Activated CD8-positive, alpha-beta T cell treated with anti-CD3 and anti-CD28 coated beads, Interleukin-2, amount 10 ng/mL, durations not matched to agents 7 days and 5 days (primary cell): ENCODE measurements at regions of chr19 and their contacts with region 1.

Region 1: DNA sequence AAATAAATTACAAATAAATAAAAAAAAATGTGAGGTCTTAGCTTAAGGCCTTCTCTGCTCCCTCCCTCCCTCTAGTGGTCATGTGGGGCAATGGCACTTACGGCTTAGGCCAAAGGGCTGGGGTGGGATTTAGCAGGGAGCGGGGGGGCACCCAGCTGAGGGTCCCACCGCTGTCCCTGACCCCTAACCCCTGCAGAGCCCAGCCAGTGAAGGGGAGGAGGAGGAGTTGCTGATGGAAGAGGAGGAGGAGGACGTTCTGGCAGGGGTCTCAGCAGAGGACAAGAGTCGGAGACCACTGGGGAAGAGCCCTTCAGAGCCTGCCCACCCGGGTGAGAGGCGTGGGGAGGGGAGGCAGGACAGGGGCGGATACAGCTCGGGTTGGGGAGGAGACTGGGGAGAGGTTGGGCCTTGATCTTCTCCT is 9.3 kb downstream of the MPND start:
- DNase-seq: peak; percentile 77
- ATAC-seq: peak; percentile 71
- H3K4me3 Mint-ChIP-seq: no peak overlapping the region
- H3K27ac Mint-ChIP-seq: peak overlapping the region; percentile 74
- H3K4me1 Mint-ChIP-seq: no peaks in the 10 kb centered on the region
- H3K27me3 Mint-ChIP-seq: no peaks in the 10 kb centered on the region

Region 2: DNA sequence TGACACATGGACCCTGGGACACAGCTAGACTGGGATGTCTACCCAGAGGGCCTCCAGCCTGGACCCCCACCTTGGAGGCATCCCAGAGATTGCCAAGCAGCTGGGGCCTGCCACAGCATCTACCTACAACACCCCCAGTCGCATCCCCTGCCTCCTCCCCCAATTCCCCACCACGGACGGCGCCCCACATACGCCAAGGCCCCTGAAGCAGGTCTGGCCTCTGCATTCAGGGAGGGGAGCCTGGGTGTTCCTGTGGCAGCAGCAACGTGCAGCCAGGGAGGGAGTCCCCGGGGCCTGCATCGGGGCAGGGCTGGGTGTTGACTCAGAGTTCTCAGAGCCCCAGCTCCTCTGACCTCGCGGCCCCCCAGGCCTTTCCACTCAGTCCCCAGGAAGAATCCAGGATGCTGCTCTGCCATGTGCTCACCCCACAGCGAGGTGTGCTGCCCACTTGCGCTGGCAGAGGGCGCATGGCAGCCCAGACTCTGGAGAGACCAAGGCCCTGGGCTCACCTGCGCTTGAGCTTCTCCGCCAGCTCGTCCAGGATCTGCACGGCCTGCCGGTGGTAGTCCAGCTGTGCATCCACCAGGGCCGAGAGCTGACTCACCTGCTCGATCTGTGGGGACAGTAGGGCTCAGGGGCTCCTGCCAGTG is 10.3 kb after region 1 on chr19:
- CTCF ChIA-PET with region 1: interaction called, 21 read pairs
- POLR2A ChIA-PET with region 1: no interaction called
- DNase-seq: no peak
- ATAC-seq: no peak
- H3K4me3 Mint-ChIP-seq: no peak overlapping the region
- H3K27ac Mint-ChIP-seq: peak overlapping the region; percentile 30
- H3K4me1 Mint-ChIP-seq: peaks cover 9% of the 10 kb centered on the region
- H3K27me3 Mint-ChIP-seq: no peaks in the 10 kb centered on the region

Region 3: DNA sequence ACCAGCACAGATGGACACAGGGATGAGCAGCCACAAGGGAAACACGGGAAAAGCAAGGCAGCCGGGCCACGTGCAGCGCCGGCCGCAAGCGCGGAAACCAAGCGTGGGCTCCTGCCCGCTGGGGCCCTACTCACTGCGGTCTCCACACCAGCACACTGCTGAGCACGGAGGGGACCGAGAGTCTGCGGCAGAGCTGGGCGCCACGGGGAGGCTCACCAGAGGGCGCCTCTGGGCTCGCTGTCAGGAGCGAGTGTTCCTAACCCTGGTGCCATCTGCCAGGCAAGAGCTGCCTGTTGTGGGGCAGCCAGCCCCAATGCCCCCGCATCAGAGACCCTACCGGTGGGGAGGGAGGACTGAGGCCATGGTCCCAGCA is 17.2 kb after region 1 on chr19:
- CTCF ChIA-PET with region 1: interaction called, 21 read pairs
- POLR2A ChIA-PET with region 1: interaction called, 3 read pairs
- DNase-seq: peak; percentile 87
- ATAC-seq: peak; percentile 79
- H3K4me3 Mint-ChIP-seq: peak overlapping the region; percentile 69
- H3K27ac Mint-ChIP-seq: peak overlapping the region; percentile 96
- H3K4me1 Mint-ChIP-seq: peaks cover 68% of the 10 kb centered on the region
- H3K27me3 Mint-ChIP-seq: no peaks in the 10 kb centered on the region

Region 4: DNA sequence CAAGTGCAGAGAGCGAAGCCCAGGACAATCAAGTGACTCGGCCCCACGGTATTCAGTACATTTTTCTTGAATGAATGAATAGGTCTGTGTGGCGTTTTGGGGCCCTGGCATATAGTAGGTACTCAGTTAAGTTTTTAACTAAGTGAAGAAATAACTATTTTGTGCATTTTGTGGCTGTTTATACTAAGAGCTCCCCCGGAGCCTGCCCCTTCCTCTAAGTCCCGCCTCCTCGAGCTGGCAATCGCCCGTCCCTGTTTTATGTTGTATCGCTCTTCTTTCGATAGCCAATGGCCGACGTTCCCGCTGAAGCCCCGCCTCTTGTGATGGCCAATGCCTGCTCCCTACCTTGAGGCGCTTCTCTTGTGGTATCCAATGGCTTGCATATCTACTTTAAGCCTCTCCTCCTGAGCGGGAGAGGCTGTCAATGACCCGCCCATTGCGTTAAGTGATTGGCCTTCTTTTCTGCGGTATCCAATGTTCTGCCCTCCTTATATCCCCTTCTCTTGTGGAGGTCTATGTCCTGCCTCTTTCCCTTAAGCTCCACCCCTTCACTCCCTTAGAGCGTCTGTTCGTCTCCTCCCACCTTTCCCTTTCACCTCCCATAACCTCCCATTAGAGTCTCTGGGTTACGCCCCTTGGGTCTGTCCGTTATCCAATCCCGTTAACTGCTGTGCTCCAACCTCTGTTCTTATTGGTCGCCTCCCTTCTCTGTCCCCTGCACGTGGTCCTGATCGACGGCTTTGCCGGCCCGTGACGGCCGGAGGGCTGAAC is 118.9 kb after region 1 on chr19:
- CTCF ChIA-PET with region 1: no interaction called
- POLR2A ChIA-PET with region 1: no interaction called
- DNase-seq: peak; percentile 99
- ATAC-seq: peak; percentile 93
- H3K4me3 Mint-ChIP-seq: no peak overlapping the region
- H3K27ac Mint-ChIP-seq: no peak overlapping the region
- H3K4me1 Mint-ChIP-seq: peaks cover 29% of the 10 kb centered on the region
- H3K27me3 Mint-ChIP-seq: no peaks in the 10 kb centered on the region

Region 5: DNA sequence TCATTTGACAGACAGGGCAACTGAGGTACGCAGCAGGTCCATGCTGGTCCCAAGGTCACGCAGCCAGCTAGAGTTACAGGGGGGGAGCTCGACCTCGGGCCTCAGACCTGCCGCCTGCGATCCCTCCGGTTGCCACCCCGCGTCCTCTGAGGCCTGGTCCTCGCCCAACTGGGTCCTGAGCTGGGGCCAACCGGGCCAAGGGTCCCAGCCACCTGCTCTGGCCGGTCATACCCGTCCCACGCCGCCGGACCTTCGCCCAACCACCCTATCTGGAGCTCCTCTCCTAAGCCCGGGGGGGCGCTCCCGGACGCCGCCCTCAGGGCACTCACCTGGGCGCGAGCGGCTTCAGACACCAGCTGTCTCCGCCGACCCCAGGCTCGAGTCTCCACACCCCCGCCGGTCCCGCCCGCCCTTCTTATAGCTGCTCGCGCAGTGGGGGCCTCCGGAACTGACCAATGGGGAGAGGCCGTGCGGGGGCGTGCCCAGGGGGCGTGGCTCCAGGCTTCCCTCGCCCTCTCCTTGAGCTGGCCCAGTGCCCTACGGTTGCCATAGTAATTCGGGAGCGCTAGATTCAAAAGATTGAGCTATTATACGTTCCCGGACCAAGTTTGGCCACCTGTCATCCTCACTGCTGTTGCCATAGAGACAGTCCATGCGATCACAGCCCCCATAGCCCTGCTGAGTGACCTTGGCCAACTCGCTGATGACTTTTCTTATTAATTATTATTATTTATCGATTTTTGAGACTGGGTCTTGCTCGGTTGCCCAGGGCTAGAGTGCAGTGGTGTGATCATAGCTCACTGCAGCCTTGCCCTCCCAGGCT is 182.3 kb after region 1 on chr19 and contains the start of gene PLIN5:
- CTCF ChIA-PET with region 1: no interaction called
- POLR2A ChIA-PET with region 1: no interaction called
- DNase-seq: peak; percentile 42
- ATAC-seq: peak; percentile 72
- H3K4me3 Mint-ChIP-seq: no peak within 1 kb of the TSS
- H3K27ac Mint-ChIP-seq: no peak within 1 kb of the TSS
- H3K4me1 Mint-ChIP-seq: peaks cover 3% of the 10 kb centered on the region
- H3K27me3 Mint-ChIP-seq: peaks cover 7% of the 10 kb centered on the region
- total RNA-seq, gene PLIN5: not detected